CD4-positive, alpha-beta T cell (primary cell): ENCODE measurements at regions of chr11 and their contacts with region 1.

Region 1: GRCh38 chr11:116772443-116773202 is at the start of gene BUD13:
- DNase-seq: peak; percentile 90 to 96 (median 94)
- ATAC-seq: peak; percentile 92
- H3K4me3 ChIP-seq: peak within 1 kb of the TSS; percentile 92
- H3K4me3 Mint-ChIP-seq: peak within 1 kb of the TSS; percentile 99
- H3K27ac ChIP-seq: peak within 1 kb of the TSS; percentile 87 to 90
- H3K27ac Mint-ChIP-seq: peak within 1 kb of the TSS; percentile 95
- H3K4me1 ChIP-seq: peaks cover 23% of the 10 kb centered on the region
- H3K4me1 Mint-ChIP-seq: peaks cover 45% of the 10 kb centered on the region
- H3K27me3 ChIP-seq: no peaks in the 10 kb centered on the region
- H3K27me3 Mint-ChIP-seq: no peaks in the 10 kb centered on the region
- CTCF ChIP-seq: peak; percentile 16
- total RNA-seq, gene BUD13: 9.2 to 10.1 TPM

Region 2: DNA sequence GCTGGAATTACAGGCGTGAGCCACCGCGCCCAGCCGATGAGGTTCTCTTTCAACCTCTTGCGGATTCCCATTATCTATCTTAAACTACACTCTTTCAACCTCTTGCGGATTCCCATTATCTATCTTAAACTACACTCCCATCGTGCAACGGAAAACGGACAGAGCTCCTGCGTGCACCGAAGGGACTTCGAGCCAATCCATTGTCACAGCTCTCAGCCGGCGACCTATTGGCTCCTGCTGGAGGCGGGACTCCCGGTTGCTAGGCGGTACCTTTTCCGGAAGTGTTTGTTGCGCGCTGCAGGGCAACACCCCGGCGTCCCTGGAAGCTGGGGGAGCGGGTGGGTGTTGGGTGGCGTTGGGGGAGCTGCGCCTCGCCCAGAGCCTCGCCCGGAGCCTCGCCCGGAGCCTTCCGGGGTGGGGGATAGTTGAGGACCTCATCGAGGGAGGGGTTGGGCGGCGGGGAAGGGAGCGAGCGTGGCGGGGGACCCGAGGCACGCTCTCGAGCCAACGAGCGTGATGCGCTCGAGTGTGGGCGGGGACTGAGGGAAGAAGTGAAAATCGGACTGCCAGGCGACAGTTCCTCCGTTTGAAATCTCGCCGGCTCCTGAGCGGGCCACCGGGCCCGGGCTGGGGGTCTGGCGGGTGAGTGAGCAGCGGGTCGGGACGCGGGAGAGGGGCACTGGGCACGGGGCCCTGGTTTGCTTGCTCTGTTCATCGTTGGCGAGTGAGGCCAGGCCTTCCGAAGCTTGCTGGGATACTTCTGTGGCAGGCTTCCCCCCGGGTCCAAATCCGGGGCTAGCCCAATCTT is 555.1 kb after region 1 on chr11 and contains the start of gene CEP164:
- CTCF ChIA-PET with region 1: no interaction called
- POLR2A ChIA-PET with region 1: no interaction called
- intact Hi-C with region 1: loop called in 1 of 2 experiments (anchors 5 kb)
- DNase-seq: peak; percentile 89 to 97 (median 92)
- ATAC-seq: peak; percentile 93
- H3K4me3 ChIP-seq: peak within 1 kb of the TSS; percentile 92
- H3K4me3 Mint-ChIP-seq: peak within 1 kb of the TSS; percentile 69
- H3K27ac ChIP-seq: peak within 1 kb of the TSS; percentile 68 to 92
- H3K27ac Mint-ChIP-seq: peak within 1 kb of the TSS; percentile 59
- H3K4me1 ChIP-seq: peaks cover 23% of the 10 kb centered on the region
- H3K4me1 Mint-ChIP-seq: peaks cover 9% of the 10 kb centered on the region
- H3K27me3 ChIP-seq: no peaks in the 10 kb centered on the region
- H3K27me3 Mint-ChIP-seq: no peaks in the 10 kb centered on the region
- CTCF ChIP-seq: no peak
- total RNA-seq, gene CEP164: 33.0 to 36.7 TPM